ENCODE measurements at regions of chr7 and their contacts with region 1.

Region 1: DNA sequence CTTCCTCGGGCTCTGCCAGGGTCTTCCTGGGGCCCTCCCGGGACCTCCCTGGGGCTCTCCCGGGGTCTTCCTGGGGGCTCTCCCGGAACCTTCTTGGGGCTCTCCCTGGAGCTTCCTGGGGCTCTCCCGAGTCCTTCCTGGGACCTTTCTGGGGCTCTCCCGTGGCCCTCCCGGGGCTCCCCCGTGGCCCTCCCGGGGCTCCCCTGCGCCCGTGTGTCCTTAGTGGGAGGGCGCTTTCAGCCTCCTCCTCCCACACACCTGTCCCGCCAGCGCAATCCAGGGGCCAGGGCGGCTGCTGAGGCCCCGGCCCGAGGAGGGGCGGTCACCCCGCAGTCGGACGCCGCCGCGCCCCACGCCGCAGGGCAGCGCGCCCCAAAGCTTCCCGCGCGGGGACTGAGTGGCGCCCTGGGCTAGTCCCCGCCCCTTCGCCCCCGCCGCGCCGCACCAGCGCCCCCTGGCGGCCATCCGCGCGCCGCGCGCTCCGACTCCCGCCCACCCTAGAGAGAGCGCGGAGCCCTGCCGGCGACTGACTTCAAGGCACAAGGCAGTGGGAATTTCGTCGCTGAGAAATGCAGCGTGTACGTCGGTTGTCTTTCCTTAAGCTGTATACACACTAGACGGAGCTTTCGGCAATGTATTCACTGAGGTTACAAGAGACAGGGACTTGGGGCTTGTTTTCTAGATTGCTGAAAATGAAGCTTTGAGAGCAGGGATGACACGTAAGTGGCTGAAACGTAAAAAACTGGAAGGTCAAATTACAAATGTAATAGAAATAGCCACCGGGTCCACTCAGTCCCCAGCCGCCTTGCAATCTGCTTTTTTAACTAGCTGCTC is 47.1 kb downstream of the INSIG1 start:
- DNase-seq: peak; percentile 84
- H3K4me3 ChIP-seq: peak overlapping the region; percentile 45
- H3K27ac ChIP-seq: peak overlapping the region; percentile 44
- H3K4me1 ChIP-seq: peaks cover 5% of the 10 kb centered on the region
- H3K27me3 ChIP-seq: no peaks in the 10 kb centered on the region
- CTCF ChIP-seq: peak; percentile 73

Region 2: DNA sequence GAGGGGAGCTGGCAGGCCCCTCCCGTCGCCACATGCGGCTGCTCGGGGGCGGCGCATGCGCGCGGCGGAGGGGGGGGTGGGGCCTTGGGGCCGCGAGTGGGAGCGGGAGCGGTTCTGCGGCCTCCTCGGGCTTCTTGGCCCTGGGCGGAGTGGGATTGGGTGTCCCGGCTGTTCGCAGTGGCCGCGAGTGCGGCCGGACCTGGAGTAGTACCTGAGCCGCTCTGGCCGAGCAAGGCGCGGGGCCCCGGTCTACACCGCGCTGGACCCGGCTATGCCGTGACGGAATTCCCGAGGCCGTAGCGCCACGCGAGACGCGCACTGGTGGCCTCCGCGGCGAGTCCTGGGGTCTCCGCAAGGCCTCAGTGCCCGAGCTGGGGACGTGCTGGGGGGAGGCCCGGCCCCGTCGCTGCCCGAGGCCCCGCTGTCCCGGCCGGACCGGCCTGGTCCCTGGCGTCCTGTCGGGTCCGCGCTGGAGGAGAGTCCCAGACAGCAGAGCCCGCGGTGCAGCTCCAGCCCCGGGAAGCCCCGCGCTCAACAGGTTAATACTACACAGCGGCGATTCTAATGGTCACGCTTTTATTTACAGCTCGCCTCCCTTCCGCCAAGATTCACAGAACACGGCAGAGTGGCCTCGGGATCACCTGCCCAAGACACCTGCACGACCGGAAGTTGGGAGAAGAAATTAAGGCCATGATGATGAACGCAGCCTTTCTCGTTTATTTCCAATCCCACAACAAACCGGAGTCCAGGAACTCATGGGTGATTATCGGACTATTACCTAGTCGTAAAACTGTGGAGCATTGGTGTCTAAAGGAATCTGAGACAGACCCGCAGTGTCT is 341.2 kb before region 1 on chr7:
- CTCF ChIA-PET with region 1: no interaction called
- POLR2A ChIA-PET with region 1: no interaction called
- intact Hi-C with region 1: loop called (anchors 10 kb)
- DNase-seq: peak; percentile 89
- H3K4me3 ChIP-seq: peak overlapping the region; percentile 87
- H3K27ac ChIP-seq: peak overlapping the region; percentile 99
- H3K4me1 ChIP-seq: peaks cover 4% of the 10 kb centered on the region
- H3K27me3 ChIP-seq: no peaks in the 10 kb centered on the region
- CTCF ChIP-seq: no peak

Region 3: GRCh38 chr7:155190688-155191087 is 154.1 kb before region 1 on chr7:
- CTCF ChIA-PET with region 1: interaction called, 3 read pairs
- POLR2A ChIA-PET with region 1: no interaction called
- intact Hi-C with region 1: loop called (anchors 1 kb)
- DNase-seq: peak; percentile 49
- H3K4me3 ChIP-seq: no peak overlapping the region
- H3K27ac ChIP-seq: no peak overlapping the region
- H3K4me1 ChIP-seq: no peaks in the 10 kb centered on the region
- H3K27me3 ChIP-seq: peaks cover 49% of the 10 kb centered on the region
- CTCF ChIP-seq: peak; percentile 87

Measured in A673 (cell line).